Heart right ventricle (tissue), 16 donors: ENCODE measurements at regions of chr7 and their contacts with region 1.

Region 1: GRCh38 chr7:45240273-45240771 is 82.7 kb downstream of the RAMP3 start:
- DNase-seq: peak; percentile 51 to 69
- ATAC-seq: peak; percentile 63 to 91 (median 84)
- H3K4me3 ChIP-seq: no peak overlapping the region
- H3K27ac ChIP-seq: peak overlapping the region in 9 of 10 donors; percentile 40 to 90 (median 72)
- H3K4me1 ChIP-seq: peaks cover 0 to 50% (median 9%) of the 10 kb centered on the region in 9 donors
- H3K27me3 ChIP-seq: peaks cover 0 to 11% (median 4%) of the 10 kb centered on the region in 7 donors
- CTCF ChIP-seq: no peak

Region 2: DNA sequence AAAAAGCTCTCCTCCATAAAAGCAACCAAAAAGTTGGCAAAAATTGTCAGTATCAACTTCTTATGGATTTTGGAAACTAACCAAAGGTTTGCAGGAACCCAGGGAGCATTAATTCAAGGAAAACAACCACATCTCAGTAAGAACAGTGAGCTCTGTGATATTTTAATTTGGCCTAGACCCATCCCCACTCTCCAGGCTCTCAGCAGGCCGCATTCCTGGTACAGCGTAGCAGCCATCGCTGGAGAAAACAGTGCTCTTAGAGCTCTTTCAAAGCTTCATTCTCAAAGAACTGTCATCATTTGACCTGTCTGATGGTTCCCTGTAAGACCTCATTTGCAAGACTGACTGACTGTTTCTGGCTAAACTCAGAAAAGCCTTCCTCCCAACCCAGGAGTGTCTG is 831.7 kb before region 1 on chr7:
- intact Hi-C with region 1: no loop called
- DNase-seq: no peak
- ATAC-seq: peak in 4 of 8 donors; percentile 47 to 59 (median 52)
- H3K4me3 ChIP-seq: no peak overlapping the region
- H3K27ac ChIP-seq: peak overlapping the region in 4 of 10 donors; percentile 19 to 27 (median 24)
- H3K4me1 ChIP-seq: peaks cover 0 to 26% (median 13%) of the 10 kb centered on the region in 9 donors
- H3K27me3 ChIP-seq: no peaks in the 10 kb centered on the region
- CTCF ChIP-seq: no peak

Region 3: DNA sequence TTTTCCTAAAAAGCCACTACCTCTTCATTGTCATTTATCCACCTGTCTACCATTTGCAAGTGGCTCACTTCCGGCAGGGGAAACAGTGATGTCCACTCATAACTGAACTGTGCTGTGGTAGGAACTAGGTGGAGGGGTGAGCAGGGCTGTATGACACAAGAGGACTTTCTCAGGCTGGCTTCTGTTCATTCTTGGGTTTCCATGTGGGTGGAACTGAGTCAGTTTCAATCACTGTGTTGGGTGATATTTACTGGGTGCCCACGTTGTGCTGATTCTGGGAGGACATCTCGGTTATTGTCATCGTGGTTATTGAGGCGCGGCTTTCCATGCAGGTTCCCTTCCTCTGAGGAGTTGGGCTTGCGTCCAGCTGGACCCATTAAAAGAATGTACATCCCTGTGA is 43.9 kb before region 1 on chr7:
- intact Hi-C with region 1: loop called in 1 of 10 experiments (anchors 10 kb)
- DNase-seq: no peak
- ATAC-seq: no peak
- H3K4me3 ChIP-seq: no peak overlapping the region
- H3K27ac ChIP-seq: no peak overlapping the region
- H3K4me1 ChIP-seq: peaks cover 0 to 9% (median 0%) of the 10 kb centered on the region in 9 donors
- H3K27me3 ChIP-seq: no peaks in the 10 kb centered on the region
- CTCF ChIP-seq: no peak

Region 4: DNA sequence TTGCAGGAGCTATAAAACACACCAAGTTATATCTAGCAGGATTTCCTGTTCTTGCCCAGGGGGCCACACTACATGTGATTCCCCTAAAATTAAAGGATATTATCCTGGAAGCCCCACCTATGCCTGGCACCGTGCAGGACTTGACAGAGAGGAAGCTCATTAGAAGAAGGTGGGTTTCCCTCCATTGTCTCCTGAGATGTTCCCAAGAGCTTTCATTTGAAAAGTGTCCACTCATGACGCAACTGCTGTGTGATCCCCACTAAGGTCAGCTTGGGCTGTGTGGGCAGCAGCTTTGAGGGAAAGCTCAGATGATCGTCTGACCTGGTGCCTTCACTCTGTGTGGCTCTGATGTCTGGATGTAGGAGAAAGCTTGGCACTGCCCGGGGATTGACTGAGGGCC is 29.3 kb before region 1 on chr7:
- intact Hi-C with region 1: loop called in 3 of 10 experiments (anchors 2 kb)
- DNase-seq: peak in 1 of 2 donors; percentile 71
- ATAC-seq: peak; percentile 86 to 97 (median 92)
- H3K4me3 ChIP-seq: no peak overlapping the region
- H3K27ac ChIP-seq: peak overlapping the region; percentile 58 to 88 (median 64)
- H3K4me1 ChIP-seq: peaks cover 5 to 34% (median 11%) of the 10 kb centered on the region in 9 donors
- H3K27me3 ChIP-seq: peaks cover 0 to 21% (median 7%) of the 10 kb centered on the region in 7 donors
- CTCF ChIP-seq: no peak

Region 5: GRCh38 chr7:45350896-45351295 is 110.6 kb after region 1 on chr7:
- intact Hi-C with region 1: no loop called
- DNase-seq: no peak
- ATAC-seq: no peak
- H3K4me3 ChIP-seq: no peak overlapping the region
- H3K27ac ChIP-seq: no peak overlapping the region
- H3K4me1 ChIP-seq: no peaks in the 10 kb centered on the region
- H3K27me3 ChIP-seq: no peaks in the 10 kb centered on the region
- CTCF ChIP-seq: no peak